HCT116 (cell line): ENCODE measurements at regions of chr5 and their contacts with region 1.

Region 1: GRCh38 chr5:108642167-108642906 is 105.4 kb upstream of the FER start:
- DNase-seq: peak; percentile 69
- ATAC-seq: peak; percentile 100
- H3K4me3 ChIP-seq: peak overlapping the region; percentile 20 to 36; a peak in 3 of 4 replicates
- H3K27ac ChIP-seq: no peak overlapping the region
- H3K4me1 ChIP-seq: peaks cover 0 to 9% of the 10 kb centered on the region in 2 experiments; a peak in 2 of 4 replicates
- H3K27me3 ChIP-seq: no peaks in the 10 kb centered on the region
- CTCF ChIP-seq: peak; percentile 74 to 92 (median 91)
- POLR2A ChIP-seq: no peak
- RAD21 ChIP-seq: peak; percentile 92

Region 2: GRCh38 chr5:107633171-107633901 is 1009.0 kb before region 1 on chr5:
- CTCF ChIA-PET with region 1: no interaction called
- POLR2A ChIA-PET with region 1: no interaction called
- RAD21 ChIA-PET with region 1: no interaction called
- intact Hi-C with region 1: no loop called
- DNase-seq: no peak
- ATAC-seq: no peak
- H3K4me3 ChIP-seq: no peak overlapping the region
- H3K27ac ChIP-seq: no peak overlapping the region
- H3K4me1 ChIP-seq: no peaks in the 10 kb centered on the region
- H3K27me3 ChIP-seq: no peaks in the 10 kb centered on the region
- CTCF ChIP-seq: no peak
- POLR2A ChIP-seq: no peak
- RAD21 ChIP-seq: no peak

Region 3: GRCh38 chr5:108118813-108119514 is 523.4 kb before region 1 on chr5:
- CTCF ChIA-PET with region 1: no interaction called
- POLR2A ChIA-PET with region 1: no interaction called
- RAD21 ChIA-PET with region 1: no interaction called
- intact Hi-C with region 1: no loop called
- DNase-seq: no peak
- ATAC-seq: no peak
- H3K4me3 ChIP-seq: no peak overlapping the region
- H3K27ac ChIP-seq: no peak overlapping the region
- H3K4me1 ChIP-seq: no peaks in the 10 kb centered on the region
- H3K27me3 ChIP-seq: no peaks in the 10 kb centered on the region
- CTCF ChIP-seq: no peak
- POLR2A ChIP-seq: no peak
- RAD21 ChIP-seq: no peak

Region 4: GRCh38 chr5:108295578-108296368 is 346.6 kb before region 1 on chr5:
- CTCF ChIA-PET with region 1: no interaction called
- POLR2A ChIA-PET with region 1: no interaction called
- RAD21 ChIA-PET with region 1: no interaction called
- intact Hi-C with region 1: no loop called
- DNase-seq: no peak
- ATAC-seq: no peak
- H3K4me3 ChIP-seq: no peak overlapping the region
- H3K27ac ChIP-seq: no peak overlapping the region
- H3K4me1 ChIP-seq: no peaks in the 10 kb centered on the region
- H3K27me3 ChIP-seq: no peaks in the 10 kb centered on the region
- CTCF ChIP-seq: no peak
- POLR2A ChIP-seq: no peak
- RAD21 ChIP-seq: no peak

Region 5: GRCh38 chr5:108655750-108656450 is 13.6 kb after region 1 on chr5:
- CTCF ChIA-PET with region 1: interaction called, 10 read pairs
- POLR2A ChIA-PET with region 1: no interaction called
- RAD21 ChIA-PET with region 1: no interaction called
- intact Hi-C with region 1: no loop called
- DNase-seq: no peak
- ATAC-seq: no peak
- H3K4me3 ChIP-seq: no peak overlapping the region
- H3K27ac ChIP-seq: no peak overlapping the region
- H3K4me1 ChIP-seq: no peaks in the 10 kb centered on the region
- H3K27me3 ChIP-seq: no peaks in the 10 kb centered on the region
- CTCF ChIP-seq: no peak
- POLR2A ChIP-seq: no peak
- RAD21 ChIP-seq: no peak

Region 6: DNA sequence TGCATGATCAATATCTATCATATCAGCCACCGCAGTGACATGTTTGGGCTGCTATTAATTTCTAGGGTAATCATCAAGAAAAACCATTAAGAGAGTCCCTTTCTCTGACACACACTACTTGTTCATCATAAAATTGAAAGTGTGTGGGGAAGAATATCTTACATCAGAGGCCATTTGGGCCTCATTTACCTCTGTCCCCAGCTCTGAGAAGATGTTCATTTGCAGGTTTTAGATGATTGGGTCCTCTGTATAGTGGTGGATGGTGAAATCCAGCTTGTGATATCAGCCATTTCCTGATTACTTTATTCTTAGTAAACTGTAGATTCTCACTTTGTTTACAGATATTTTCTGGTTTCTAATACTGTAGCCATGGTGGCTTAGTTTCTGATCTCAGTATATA is 797.3 kb after region 1 on chr5:
- CTCF ChIA-PET with region 1: no interaction called
- POLR2A ChIA-PET with region 1: no interaction called
- RAD21 ChIA-PET with region 1: no interaction called
- intact Hi-C with region 1: loop called (anchors 1 kb)
- DNase-seq: no peak
- ATAC-seq: no peak
- H3K4me3 ChIP-seq: no peak overlapping the region
- H3K27ac ChIP-seq: no peak overlapping the region
- H3K4me1 ChIP-seq: no peaks in the 10 kb centered on the region
- H3K27me3 ChIP-seq: no peaks in the 10 kb centered on the region
- CTCF ChIP-seq: no peak
- POLR2A ChIP-seq: no peak
- RAD21 ChIP-seq: no peak

Region 7: DNA sequence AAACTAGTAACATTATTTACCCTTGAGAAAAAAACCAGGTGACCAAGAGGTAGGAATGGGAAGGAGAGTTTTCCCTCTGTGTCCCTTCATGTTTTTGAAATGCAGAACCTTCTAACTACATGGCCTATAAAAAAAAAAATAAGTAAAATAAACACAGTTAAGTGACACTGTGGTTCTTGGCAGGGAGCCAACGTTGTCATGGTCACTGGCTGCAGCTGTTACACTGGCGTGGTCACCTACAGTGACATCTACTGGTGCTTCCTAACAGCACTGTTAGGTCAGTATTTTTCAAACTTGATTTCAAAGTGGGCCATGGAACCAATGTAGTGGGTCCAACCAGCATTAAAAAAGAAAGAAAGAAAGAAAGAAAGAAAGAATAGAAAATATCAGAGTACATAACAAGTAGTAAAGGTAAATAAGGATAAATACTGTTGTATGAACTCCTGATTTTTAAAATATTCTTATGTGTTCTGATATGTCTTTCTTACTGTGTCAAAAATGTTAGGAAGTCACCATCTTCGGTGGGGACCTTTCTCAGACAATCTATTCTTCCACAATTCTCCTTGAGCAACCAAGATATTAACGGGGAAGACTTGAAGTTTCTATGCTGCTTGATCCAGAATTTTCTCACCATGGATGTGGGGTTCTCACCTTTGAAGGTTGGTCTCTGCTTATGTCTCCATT is 826.5 kb after region 1 on chr5:
- CTCF ChIA-PET with region 1: interaction called, 3 read pairs
- POLR2A ChIA-PET with region 1: no interaction called
- RAD21 ChIA-PET with region 1: no interaction called
- intact Hi-C with region 1: loop called (anchors 5 kb)
- DNase-seq: peak; percentile 84
- ATAC-seq: peak; percentile 87
- H3K4me3 ChIP-seq: no peak overlapping the region
- H3K27ac ChIP-seq: no peak overlapping the region
- H3K4me1 ChIP-seq: 0 out of 4 replicates have a peak, but pooled peaks cover 0 to 4% of the 10 kb centered on the region in 2 experiments
- H3K27me3 ChIP-seq: no peaks in the 10 kb centered on the region
- CTCF ChIP-seq: peak; percentile 47 to 82 (median 82); a peak in 4 of 6 replicates
- POLR2A ChIP-seq: no peak
- RAD21 ChIP-seq: peak; percentile 76

Region 8: GRCh38 chr5:109688971-109689739 is 1046.8 kb after region 1 on chr5:
- CTCF ChIA-PET with region 1: interaction called, 4 read pairs
- POLR2A ChIA-PET with region 1: no interaction called
- RAD21 ChIA-PET with region 1: no interaction called
- intact Hi-C with region 1: loop called (anchors 10 kb)
- DNase-seq: peak; percentile 71
- ATAC-seq: peak; percentile 85
- H3K4me3 ChIP-seq: peak overlapping the region; percentile 67 to 74
- H3K27ac ChIP-seq: peak overlapping the region; percentile 54
- H3K4me1 ChIP-seq: peaks cover 4 to 18% of the 10 kb centered on the region in 2 experiments; a peak in 3 of 4 replicates
- H3K27me3 ChIP-seq: no peaks in the 10 kb centered on the region
- CTCF ChIP-seq: no peak
- POLR2A ChIP-seq: peak; percentile 88
- RAD21 ChIP-seq: 0 out of 2 replicates have a peak, but pooled peaks have one; percentile 10